ENCODE measurements at regions of chr1 and their contacts with region 1.

Region 1: DNA sequence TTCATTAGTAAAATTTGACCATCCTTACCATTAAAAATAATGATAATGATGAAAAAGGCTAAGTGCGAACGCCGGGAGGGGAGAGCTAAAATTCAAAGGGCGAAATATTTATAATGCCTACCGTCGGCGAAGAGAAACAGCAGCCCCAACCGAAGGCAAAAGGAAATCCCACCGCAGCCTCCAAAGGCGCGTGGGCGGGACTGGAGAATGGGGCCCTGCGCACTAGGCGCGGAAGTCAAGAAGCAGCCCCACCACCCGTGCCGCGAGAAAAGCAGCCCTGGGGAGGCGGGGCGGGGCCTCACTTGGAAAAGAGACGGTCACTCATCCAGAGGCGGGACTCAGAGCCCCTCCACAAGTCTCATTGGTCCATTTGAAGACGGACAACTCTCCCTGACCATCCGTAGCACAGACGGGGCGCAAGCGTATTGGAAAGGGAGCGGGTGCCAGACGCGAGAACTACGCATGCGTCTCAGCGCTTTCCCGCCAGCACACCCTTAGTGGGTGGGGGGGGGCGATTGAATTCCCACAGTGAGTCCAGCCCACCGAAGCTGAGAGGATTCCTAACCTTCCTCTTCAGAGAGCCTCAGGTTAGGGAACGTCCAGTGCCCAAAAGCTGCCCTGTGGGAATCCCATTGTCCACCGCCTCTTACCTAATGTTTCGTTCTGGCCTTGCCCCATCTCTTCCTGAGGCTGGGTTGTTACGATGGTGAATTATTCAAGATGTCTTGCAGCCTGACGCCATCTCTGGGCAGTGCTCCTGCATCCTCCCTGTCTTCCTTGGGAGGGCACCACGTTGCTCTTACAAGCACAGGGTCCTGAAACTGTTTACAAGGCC is 19.0 kb downstream of the MTX1 start:
- DNase-seq: peak; percentile 99 to 100 (median 99)
- H3K4me3 ChIP-seq: peak overlapping the region; percentile 69 to 88 (median 80)
- H3K27ac ChIP-seq: peak overlapping the region; percentile 82 to 89
- H3K4me1 ChIP-seq: peaks cover 0 to 12% (median 3%) of the 10 kb centered on the region in 3 donors
- H3K27me3 ChIP-seq: no peaks in the 10 kb centered on the region
- CTCF ChIP-seq: no peak

Region 2: GRCh38 chr1:154809436-154810413 is 417.8 kb before region 1 on chr1:
- intact Hi-C with region 1: no loop called
- DNase-seq: no peak
- H3K4me3 ChIP-seq: no peak overlapping the region
- H3K27ac ChIP-seq: no peak overlapping the region
- H3K4me1 ChIP-seq: peaks cover 0 to 29% (median 14%) of the 10 kb centered on the region in 3 donors
- H3K27me3 ChIP-seq: no peaks in the 10 kb centered on the region
- CTCF ChIP-seq: no peak

Region 3: GRCh38 chr1:155172732-155173477 is 54.6 kb before region 1 on chr1 and contains the start of gene KRTCAP2:
- intact Hi-C with region 1: loop called (anchors 10 kb)
- DNase-seq: peak; percentile 96 to 98 (median 98)
- H3K4me3 ChIP-seq: peak within 1 kb of the TSS; percentile 82 to 94 (median 93)
- H3K27ac ChIP-seq: peak within 1 kb of the TSS; percentile 92
- H3K4me1 ChIP-seq: peaks cover 0 to 19% (median 10%) of the 10 kb centered on the region in 3 donors
- H3K27me3 ChIP-seq: no peaks in the 10 kb centered on the region
- CTCF ChIP-seq: peak; percentile 97
- total RNA-seq, gene KRTCAP2: 198 TPM

Region 4: GRCh38 chr1:155360051-155360450 is 132.6 kb after region 1 on chr1:
- intact Hi-C with region 1: no loop called
- DNase-seq: no peak
- H3K4me3 ChIP-seq: no peak overlapping the region
- H3K27ac ChIP-seq: no peak overlapping the region
- H3K4me1 ChIP-seq: no peaks in the 10 kb centered on the region
- H3K27me3 ChIP-seq: no peaks in the 10 kb centered on the region
- CTCF ChIP-seq: no peak